ENCODE measurements at regions of chr2 and their contacts with region 1.

Region 1: GRCh38 chr2:163187995-163188655 is 349.6 kb upstream of the KCNH7 start:
- DNase-seq: no peak
- H3K4me3 ChIP-seq: no peak overlapping the region
- H3K27ac ChIP-seq: no peak overlapping the region
- H3K4me1 ChIP-seq: no peaks in the 10 kb centered on the region
- CTCF ChIP-seq: no peak

Region 2: DNA sequence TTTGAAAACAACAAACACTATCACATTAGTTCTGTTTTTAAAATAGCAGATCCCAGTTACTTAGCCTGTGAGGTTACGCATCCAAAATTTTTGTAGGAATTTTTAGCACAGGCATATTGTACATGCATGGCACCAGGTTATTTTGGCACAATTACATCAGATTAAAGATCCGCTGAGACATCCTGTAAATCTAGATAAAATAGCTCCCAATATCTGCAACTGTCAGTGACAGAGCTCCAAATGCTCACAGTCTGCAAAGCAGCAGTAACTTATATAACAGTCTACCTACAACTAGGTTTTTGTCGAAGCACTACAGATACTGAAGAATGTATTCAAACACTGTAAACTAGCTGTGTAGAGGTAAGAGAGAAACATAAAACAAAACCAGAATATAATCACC is 148.9 kb before region 1 on chr2:
- CTCF ChIA-PET with region 1: no interaction called
- POLR2A ChIA-PET with region 1: no interaction called
- intact Hi-C with region 1: no loop called
- DNase-seq: no peak
- H3K4me3 ChIP-seq: no peak overlapping the region
- H3K27ac ChIP-seq: no peak overlapping the region
- H3K4me1 ChIP-seq: no peaks in the 10 kb centered on the region
- CTCF ChIP-seq: no peak

Region 3: DNA sequence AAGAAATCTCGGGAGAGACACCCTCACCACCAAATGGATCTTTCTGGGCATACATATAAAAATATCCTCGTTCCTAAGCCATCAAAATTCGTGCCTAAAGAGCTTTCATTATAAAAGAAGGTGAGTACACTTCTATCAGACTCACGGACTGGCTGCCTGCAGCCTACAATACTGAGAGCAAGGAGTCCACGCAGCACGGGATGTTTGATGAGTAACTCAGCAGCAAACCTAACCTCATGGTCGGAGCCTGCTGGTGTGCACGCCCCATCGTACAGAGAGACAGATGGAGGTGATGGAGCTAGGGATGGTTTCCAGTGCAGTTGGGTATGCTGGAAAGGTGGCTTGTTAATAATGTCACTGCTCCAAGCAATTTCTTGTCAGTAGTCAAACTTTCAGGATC is 291.5 kb after region 1 on chr2:
- CTCF ChIA-PET with region 1: no interaction called
- POLR2A ChIA-PET with region 1: no interaction called
- intact Hi-C with region 1: no loop called
- DNase-seq: no peak
- H3K4me3 ChIP-seq: no peak overlapping the region
- H3K27ac ChIP-seq: no peak overlapping the region
- H3K4me1 ChIP-seq: no peaks in the 10 kb centered on the region
- CTCF ChIP-seq: no peak

Region 4: GRCh38 chr2:164430166-164430783 is 1242.2 kb after region 1 on chr2:
- CTCF ChIA-PET with region 1: no interaction called
- POLR2A ChIA-PET with region 1: no interaction called
- intact Hi-C with region 1: loop called (anchors 5 kb)
- DNase-seq: peak; percentile 19
- H3K4me3 ChIP-seq: no peak overlapping the region
- H3K27ac ChIP-seq: no peak overlapping the region
- H3K4me1 ChIP-seq: no peaks in the 10 kb centered on the region
- CTCF ChIP-seq: peak; percentile 81

Measured in OCI-LY7 (cell line).